ENCODE measurements at regions of chr13 and their contacts with region 1.

Region 1: GRCh38 chr13:114319441-114319913 is 5.2 kb downstream of the CHAMP1 start:
- DNase-seq: peak; percentile 93
- ATAC-seq: peak; percentile 74
- H3K4me3 ChIP-seq: no peak overlapping the region
- H3K27ac ChIP-seq: peak overlapping the region; percentile 83; the same call in 1 of the 2 replicates
- H3K4me1 ChIP-seq: peaks cover 13% of the 10 kb centered on the region
- H3K27me3 ChIP-seq: no peaks in the 10 kb centered on the region
- CTCF ChIP-seq: no peak
- POLR2A ChIP-seq: no peak
- RAD21 ChIP-seq: no peak

Region 2: DNA sequence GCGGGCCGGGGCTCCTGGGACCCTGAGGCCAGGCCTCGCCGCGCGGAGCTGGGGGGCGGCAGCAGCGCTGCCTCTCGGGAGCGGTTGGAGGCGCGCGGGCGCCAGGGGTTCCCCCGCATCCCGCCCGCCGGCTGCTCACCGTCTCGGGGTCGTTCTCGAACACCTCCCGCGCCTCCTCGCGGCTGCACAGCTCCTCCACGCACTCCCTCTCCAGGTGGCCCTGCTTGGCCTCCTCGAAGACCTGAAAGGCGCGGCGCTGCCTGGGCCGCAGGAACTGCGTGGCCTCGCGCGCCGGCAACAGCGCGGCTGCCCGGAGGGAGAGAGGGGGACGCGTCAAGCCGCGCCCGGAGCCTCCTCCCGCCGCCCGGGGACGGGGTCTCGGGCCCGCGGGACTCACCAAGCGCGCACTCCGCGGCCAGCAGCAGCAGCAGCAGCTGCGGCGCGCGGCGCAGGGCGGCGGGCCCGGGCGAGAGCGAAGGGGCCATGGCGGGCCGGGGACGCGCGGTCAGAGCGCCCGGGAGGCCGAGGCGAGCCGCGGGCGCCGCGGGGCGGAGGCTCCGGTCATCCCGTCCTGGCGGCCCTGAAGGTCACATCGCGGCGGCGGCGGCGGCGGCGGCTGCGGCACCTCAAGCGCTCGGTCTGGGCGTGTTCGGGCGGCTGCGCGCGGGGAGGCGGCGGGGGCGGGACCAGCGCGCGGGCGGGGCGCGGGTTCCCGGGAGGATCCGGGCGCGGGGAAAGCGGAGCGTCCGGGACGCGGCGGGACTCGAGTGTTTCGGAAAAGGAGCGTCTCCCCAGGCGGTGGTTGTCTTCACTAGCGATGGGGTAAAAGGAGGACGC is 455.8 kb before region 1 on chr13 and contains the start of gene GAS6:
- CTCF ChIA-PET with region 1: no interaction called
- POLR2A ChIA-PET with region 1: no interaction called
- dilution Hi-C with region 1: no loop called
- in situ Hi-C with region 1: no loop called
- intact Hi-C with region 1: no loop called
- DNase-seq: no peak
- ATAC-seq: peak; percentile 63
- H3K4me3 ChIP-seq: peak within 1 kb of the TSS; percentile 93
- H3K27ac ChIP-seq: peak within 1 kb of the TSS; percentile 97
- H3K4me1 ChIP-seq: peaks cover 25% of the 10 kb centered on the region
- H3K27me3 ChIP-seq: no peaks in the 10 kb centered on the region
- CTCF ChIP-seq: no peak; the same call in 1 of the 2 replicates
- POLR2A ChIP-seq: no peak
- RAD21 ChIP-seq: no peak
- total RNA-seq, gene GAS6: 212 and 220 TPM in 2 replicates

Region 3: GRCh38 chr13:114339857-114340534 is 20.5 kb after region 1 on chr13:
- CTCF ChIA-PET with region 1: no interaction called
- POLR2A ChIA-PET with region 1: no interaction called
- dilution Hi-C with region 1: no loop called
- in situ Hi-C with region 1: no loop called
- intact Hi-C with region 1: loop called (anchors 1 kb)
- DNase-seq: peak; percentile 30
- ATAC-seq: peak; percentile 35; the same call in 1 of the 2 replicates
- H3K4me3 ChIP-seq: no peak overlapping the region
- H3K27ac ChIP-seq: no peak overlapping the region
- H3K4me1 ChIP-seq: no peaks in the 10 kb centered on the region
- H3K27me3 ChIP-seq: peaks cover 2% of the 10 kb centered on the region; the same call in 1 of the 2 replicates
- CTCF ChIP-seq: peak; percentile 61
- POLR2A ChIP-seq: no peak
- RAD21 ChIP-seq: peak; percentile 62

Measured in IMR-90 (cell line).